Panc1 (cell line): ENCODE measurements at regions of chr9 and their contacts with region 1.

Region 1: GRCh38 chr9:112074250-112075008 is 100.7 kb downstream of the SUSD1 start:
- DNase-seq: peak; percentile 82
- ATAC-seq: peak; percentile 88
- H3K4me3 ChIP-seq: no peak overlapping the region
- H3K27ac ChIP-seq: peak overlapping the region; percentile 91
- H3K4me1 ChIP-seq: peaks cover 16% of the 10 kb centered on the region; the same call in 1 of the 2 replicates
- H3K27me3 ChIP-seq: no peaks in the 10 kb centered on the region
- CTCF ChIP-seq: peak; percentile 87

Region 2: GRCh38 chr9:111759762-111760639 is 314.4 kb before region 1 on chr9:
- CTCF ChIA-PET with region 1: interaction called, 8 read pairs
- POLR2A ChIA-PET with region 1: no interaction called
- in situ Hi-C with region 1: no loop called
- intact Hi-C with region 1: loop called (anchors 1 kb)
- DNase-seq: peak; percentile 88
- ATAC-seq: peak; percentile 93
- H3K4me3 ChIP-seq: no peak overlapping the region
- H3K27ac ChIP-seq: peak overlapping the region; percentile 76
- H3K4me1 ChIP-seq: peaks cover 2% of the 10 kb centered on the region; the same call in 1 of the 2 replicates
- H3K27me3 ChIP-seq: no peaks in the 10 kb centered on the region
- CTCF ChIP-seq: peak; percentile 52; the same call in 1 of the 2 replicates

Region 3: DNA sequence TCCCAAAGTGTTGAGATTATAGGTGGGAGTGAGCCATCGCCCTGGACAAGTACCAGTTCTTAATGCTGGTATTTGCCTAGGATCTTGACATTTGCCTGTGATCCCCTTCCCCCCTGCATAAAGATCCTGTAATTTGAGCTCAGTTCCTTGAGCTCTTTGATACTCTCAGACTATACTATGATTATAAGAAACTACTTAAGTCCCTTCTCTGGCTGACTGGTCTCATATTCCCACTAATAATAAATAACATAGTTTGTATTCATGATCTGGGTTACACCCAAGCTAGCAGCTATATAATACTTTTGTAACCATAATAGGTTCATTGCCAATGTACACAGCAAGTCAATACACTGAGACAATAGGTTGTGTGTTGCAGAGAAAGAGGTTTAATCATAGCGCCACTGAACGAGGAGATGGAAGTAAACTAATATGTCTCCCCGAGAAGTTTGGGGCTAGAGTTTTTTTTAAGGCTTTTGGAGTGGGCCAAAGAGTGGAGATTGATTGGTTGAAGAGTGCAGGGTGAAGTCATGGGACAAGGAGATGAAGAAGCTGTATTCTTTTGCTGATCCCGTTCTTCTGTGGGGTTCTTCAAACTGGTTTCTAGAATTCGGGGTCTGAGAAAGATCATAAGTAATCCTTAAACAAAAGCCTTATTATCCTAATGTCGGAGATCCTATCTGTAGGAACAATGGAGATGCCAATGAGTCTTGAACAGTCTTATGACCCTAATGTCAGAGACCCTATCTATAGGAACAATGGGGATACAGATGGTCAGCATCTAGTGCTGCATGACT is 259.0 kb before region 1 on chr9:
- CTCF ChIA-PET with region 1: no interaction called
- POLR2A ChIA-PET with region 1: no interaction called
- in situ Hi-C with region 1: no loop called
- intact Hi-C with region 1: no loop called
- DNase-seq: no peak
- ATAC-seq: no peak
- H3K4me3 ChIP-seq: no peak overlapping the region
- H3K27ac ChIP-seq: no peak overlapping the region
- H3K4me1 ChIP-seq: no peaks in the 10 kb centered on the region
- H3K27me3 ChIP-seq: no peaks in the 10 kb centered on the region
- CTCF ChIP-seq: no peak

Region 4: DNA sequence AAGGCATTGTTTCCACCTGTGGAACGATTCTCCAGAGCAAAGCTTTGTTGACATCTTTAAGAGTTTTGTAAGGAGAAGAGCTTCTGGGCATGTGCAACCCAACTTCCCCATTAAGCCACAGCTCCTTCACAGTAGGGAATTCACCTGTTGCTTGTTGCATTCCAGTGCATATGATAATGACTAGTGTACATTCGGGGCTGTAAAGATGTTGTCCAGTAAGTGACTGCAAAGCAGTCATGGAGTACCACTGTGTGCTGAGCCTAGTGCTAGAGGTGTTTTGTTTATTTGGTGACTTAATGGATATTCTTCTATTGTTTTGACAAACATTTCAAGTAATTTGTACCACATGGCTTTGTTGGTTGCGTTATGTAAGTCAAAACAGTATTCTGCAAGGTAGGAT is 165.0 kb before region 1 on chr9:
- CTCF ChIA-PET with region 1: interaction called, 11 read pairs
- POLR2A ChIA-PET with region 1: no interaction called
- in situ Hi-C with region 1: no loop called
- intact Hi-C with region 1: loop called (anchors 10 kb)
- DNase-seq: no peak
- ATAC-seq: peak; percentile 51; the same call in 1 of the 2 replicates
- H3K4me3 ChIP-seq: no peak overlapping the region
- H3K27ac ChIP-seq: peak overlapping the region; percentile 44; the same call in 1 of the 2 replicates
- H3K4me1 ChIP-seq: peaks cover 66% of the 10 kb centered on the region
- H3K27me3 ChIP-seq: no peaks in the 10 kb centered on the region
- CTCF ChIP-seq: no peak

Region 5: DNA sequence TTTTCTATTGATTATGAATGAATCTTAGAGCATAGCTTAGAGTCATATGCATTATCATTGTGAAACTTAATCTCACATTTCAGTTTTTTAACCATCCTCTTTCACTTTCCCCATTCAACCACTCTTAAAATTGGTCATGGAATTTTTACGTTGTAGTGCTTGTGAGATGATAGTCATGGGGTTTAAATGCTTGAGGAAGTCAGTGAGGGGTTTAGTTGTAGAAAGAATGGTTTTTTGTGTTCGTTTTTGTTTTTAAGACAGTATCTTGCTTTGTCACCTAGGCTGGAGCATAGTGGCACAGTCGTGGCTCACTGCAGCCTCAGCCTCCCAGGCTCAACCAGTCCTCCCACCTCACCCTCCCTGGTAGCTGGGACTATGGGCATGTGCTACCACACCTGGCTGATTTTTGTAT is 158.2 kb before region 1 on chr9:
- CTCF ChIA-PET with region 1: interaction called, 11 read pairs
- POLR2A ChIA-PET with region 1: interaction called, 5 read pairs
- in situ Hi-C with region 1: no loop called
- intact Hi-C with region 1: no loop called
- DNase-seq: no peak
- ATAC-seq: no peak
- H3K4me3 ChIP-seq: no peak overlapping the region
- H3K27ac ChIP-seq: peak overlapping the region; percentile 52; the same call in 1 of the 2 replicates
- H3K4me1 ChIP-seq: peaks cover 41% of the 10 kb centered on the region
- H3K27me3 ChIP-seq: no peaks in the 10 kb centered on the region
- CTCF ChIP-seq: no peak

Region 6: DNA sequence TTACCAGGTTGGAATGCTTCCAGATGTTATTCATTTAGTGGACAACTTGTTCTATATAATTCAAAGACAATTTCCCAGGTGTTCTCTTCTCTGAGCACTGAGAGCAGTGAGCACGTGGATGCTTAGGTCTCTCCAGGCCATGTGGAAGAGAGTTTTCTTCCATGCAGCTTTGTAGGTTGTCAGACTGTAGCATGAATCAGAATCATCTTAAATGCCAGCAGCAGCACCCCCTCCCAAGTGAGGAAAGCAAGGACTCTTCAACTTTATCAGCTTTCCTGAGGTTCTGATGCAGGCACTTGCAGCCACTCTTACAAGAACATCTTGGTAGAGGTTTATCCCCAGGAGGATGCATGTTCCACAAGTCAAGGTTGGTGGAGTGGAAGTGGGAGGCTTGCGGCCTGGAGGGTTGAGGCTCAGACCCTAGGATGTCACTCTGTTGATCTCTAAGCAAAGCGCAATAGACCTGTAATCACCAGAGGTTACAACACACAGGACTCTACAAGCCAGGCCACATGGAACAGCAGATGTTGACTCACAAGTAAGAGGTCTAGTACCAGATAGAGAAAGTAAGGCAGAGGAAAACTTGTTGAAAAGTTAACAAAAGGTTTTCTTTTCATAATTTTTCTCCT is 130.1 kb before region 1 on chr9:
- CTCF ChIA-PET with region 1: interaction called, 8 read pairs
- POLR2A ChIA-PET with region 1: no interaction called
- in situ Hi-C with region 1: no loop called
- intact Hi-C with region 1: loop called (anchors 5 kb)
- DNase-seq: no peak
- ATAC-seq: peak; percentile 52
- H3K4me3 ChIP-seq: no peak overlapping the region
- H3K27ac ChIP-seq: peak overlapping the region; percentile 29; the same call in 1 of the 2 replicates
- H3K4me1 ChIP-seq: peaks cover 15% of the 10 kb centered on the region
- H3K27me3 ChIP-seq: no peaks in the 10 kb centered on the region
- CTCF ChIP-seq: no peak

Region 7: GRCh38 chr9:111975709-111976108 is 98.7 kb before region 1 on chr9:
- CTCF ChIA-PET with region 1: interaction called, 14 read pairs
- POLR2A ChIA-PET with region 1: no interaction called
- in situ Hi-C with region 1: no loop called
- intact Hi-C with region 1: no loop called
- DNase-seq: no peak
- ATAC-seq: peak; percentile 71
- H3K4me3 ChIP-seq: no peak overlapping the region
- H3K27ac ChIP-seq: peak overlapping the region; percentile 59; the same call in 1 of the 2 replicates
- H3K4me1 ChIP-seq: peaks cover 20% of the 10 kb centered on the region
- H3K27me3 ChIP-seq: no peaks in the 10 kb centered on the region
- CTCF ChIP-seq: no peak; the same call in 1 of the 2 replicates